Caco-2 (cell line): ENCODE measurements at regions of chr19 and their contacts with region 1.

Region 1: GRCh38 chr19:52048555-52049501 is at the start of gene ZNF432:
- DNase-seq: peak; percentile 92 to 93
- H3K4me3 ChIP-seq: peak within 1 kb of the TSS; percentile 86
- H3K4me3 Mint-ChIP-seq: peak within 1 kb of the TSS; percentile 93
- H3K27ac Mint-ChIP-seq: peak within 1 kb of the TSS; percentile 99
- H3K4me1 ChIP-seq: 0 out of 2 replicates have a peak, but pooled peaks cover 9% of the 10 kb centered on the region
- H3K4me1 Mint-ChIP-seq: peaks cover 17% of the 10 kb centered on the region
- H3K27me3 ChIP-seq: no peaks in the 10 kb centered on the region
- H3K27me3 Mint-ChIP-seq: no peaks in the 10 kb centered on the region
- CTCF ChIP-seq: no peak
- total RNA-seq, gene ZNF432: 7.0 and 10.5 TPM in 2 replicates

Region 2: DNA sequence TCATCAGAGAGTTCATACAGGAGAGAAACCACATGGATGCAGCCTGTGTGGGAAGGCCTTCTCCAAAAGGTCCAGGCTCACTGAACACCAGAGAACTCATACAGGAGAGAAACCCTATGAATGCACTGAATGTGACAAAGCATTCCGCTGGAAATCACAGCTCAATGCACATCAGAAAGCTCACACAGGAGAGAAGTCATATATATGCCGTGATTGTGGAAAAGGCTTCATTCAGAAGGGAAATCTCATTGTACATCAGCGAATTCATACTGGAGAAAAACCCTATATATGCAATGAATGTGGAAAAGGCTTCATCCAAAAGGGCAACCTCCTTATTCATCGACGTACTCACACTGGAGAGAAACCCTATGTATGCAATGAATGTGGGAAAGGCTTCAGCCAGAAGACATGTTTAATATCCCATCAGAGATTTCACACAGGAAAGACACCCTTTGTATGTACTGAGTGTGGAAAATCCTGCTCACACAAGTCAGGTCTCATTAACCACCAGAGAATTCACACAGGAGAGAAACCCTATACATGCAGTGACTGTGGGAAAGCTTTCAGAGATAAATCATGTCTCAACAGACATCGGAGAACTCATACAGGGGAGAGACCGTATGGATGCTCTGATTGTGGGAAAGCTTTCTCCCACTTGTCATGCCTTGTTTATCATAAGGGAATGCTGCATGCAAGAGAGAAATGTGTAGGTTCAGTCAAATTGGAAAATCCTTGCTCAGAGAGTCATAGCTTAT is 103.9 kb before region 1 on chr19:
- CTCF ChIA-PET with region 1: no interaction called
- POLR2A ChIA-PET with region 1: no interaction called
- intact Hi-C with region 1: no loop called
- DNase-seq: no peak
- H3K4me3 ChIP-seq: no peak overlapping the region
- H3K4me3 Mint-ChIP-seq: no peak overlapping the region
- H3K27ac Mint-ChIP-seq: no peak overlapping the region
- H3K4me1 ChIP-seq: no peaks in the 10 kb centered on the region
- H3K4me1 Mint-ChIP-seq: no peaks in the 10 kb centered on the region
- H3K27me3 ChIP-seq: no peaks in the 10 kb centered on the region
- H3K27me3 Mint-ChIP-seq: no peaks in the 10 kb centered on the region
- CTCF ChIP-seq: no peak

Region 3: DNA sequence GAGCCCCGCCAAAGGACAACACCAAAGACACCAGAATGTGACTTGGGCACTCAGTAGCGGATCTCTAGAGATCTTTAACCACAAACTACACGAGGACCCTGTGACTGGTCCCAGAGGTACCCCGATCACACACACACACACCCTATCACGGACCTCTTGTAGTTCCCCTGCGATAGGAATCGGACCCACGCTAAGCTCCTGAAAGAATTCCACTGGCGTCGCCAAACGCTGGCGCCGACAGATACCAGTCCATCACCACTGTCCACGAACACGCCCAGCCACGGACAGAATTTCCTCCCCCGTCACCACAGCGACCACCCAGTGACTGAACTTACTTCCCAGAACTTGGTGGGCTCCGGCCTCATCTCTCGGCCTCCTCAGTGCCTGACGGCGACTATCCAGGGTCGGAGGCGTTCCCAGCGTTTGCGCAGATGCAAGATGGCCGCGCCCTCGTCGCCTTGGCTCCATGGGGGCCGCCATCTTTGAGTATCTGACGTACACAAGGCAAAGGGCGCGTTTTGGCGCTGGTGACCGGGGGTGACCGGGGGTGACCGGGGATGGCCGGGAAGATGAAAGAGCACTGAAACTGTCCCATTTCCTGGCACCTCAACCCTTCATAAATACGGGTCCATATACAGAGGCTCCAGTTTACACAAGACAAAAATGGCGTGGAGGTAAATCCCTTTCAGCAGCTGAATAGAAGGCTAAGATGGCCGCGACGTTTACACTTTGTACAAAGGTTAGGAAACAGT is 40.8 kb before region 1 on chr19 and contains the start of gene ZNF615:
- CTCF ChIA-PET with region 1: no interaction called
- POLR2A ChIA-PET with region 1: interaction called, 5 read pairs
- intact Hi-C with region 1: loop called (anchors 1 kb)
- DNase-seq: peak; percentile 86 to 90
- H3K4me3 ChIP-seq: peak within 1 kb of the TSS; percentile 89
- H3K4me3 Mint-ChIP-seq: peak within 1 kb of the TSS; percentile 96
- H3K27ac Mint-ChIP-seq: peak within 1 kb of the TSS; percentile 98
- H3K4me1 ChIP-seq: no peaks in the 10 kb centered on the region
- H3K4me1 Mint-ChIP-seq: peaks cover 10% of the 10 kb centered on the region
- H3K27me3 ChIP-seq: no peaks in the 10 kb centered on the region
- H3K27me3 Mint-ChIP-seq: no peaks in the 10 kb centered on the region
- CTCF ChIP-seq: no peak
- total RNA-seq, gene ZNF615: 5.2 and 7.1 TPM in 2 replicates

Region 4: DNA sequence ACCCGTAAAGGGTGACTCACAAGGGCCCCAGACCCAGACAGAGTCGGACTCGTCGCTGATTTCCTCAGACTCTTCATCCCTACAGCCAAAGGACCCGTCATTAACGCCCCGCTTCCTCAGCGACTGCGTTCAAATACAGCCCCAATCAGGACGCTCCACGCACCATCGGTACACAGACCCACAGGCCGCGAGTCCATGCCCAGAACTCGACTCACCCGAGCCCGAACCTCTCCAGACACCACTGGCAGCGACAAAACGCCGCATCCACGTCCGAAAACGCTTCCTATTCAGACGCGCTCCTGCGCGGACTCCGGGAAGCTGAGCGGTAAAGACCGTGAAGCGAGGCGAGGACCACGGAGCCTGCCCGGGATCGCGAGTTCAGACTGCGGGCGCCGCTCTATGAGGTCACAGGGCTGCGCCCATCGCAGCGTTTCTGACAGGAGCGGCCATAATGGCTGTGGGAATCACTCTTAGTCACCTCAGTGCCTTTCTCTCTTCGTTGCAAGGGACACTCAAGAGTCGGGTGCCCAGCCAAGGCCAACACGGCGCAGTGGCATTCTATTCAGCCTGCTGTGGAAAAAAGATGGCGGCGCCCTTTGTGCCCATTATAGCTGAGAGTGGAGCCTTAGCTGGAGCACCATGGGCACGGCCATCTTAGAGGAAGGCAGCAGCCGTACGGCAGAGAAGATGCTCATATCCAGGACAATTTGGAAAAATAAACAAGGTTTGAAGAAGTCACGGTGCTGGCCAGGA is 20.6 kb before region 1 on chr19 and contains the start of gene ZNF614:
- CTCF ChIA-PET with region 1: interaction called, 3 read pairs
- POLR2A ChIA-PET with region 1: no interaction called
- intact Hi-C with region 1: loop called (anchors 1 kb)
- DNase-seq: peak; percentile 87 to 90
- H3K4me3 ChIP-seq: peak within 1 kb of the TSS; percentile 79
- H3K4me3 Mint-ChIP-seq: peak within 1 kb of the TSS; percentile 92
- H3K27ac Mint-ChIP-seq: peak within 1 kb of the TSS; percentile 93
- H3K4me1 ChIP-seq: peaks cover 32% of the 10 kb centered on the region
- H3K4me1 Mint-ChIP-seq: peaks cover 17% of the 10 kb centered on the region
- H3K27me3 ChIP-seq: no peaks in the 10 kb centered on the region
- H3K27me3 Mint-ChIP-seq: no peaks in the 10 kb centered on the region
- CTCF ChIP-seq: no peak
- total RNA-seq, gene ZNF614: 7.8 and 8.7 TPM in 2 replicates

Region 5: DNA sequence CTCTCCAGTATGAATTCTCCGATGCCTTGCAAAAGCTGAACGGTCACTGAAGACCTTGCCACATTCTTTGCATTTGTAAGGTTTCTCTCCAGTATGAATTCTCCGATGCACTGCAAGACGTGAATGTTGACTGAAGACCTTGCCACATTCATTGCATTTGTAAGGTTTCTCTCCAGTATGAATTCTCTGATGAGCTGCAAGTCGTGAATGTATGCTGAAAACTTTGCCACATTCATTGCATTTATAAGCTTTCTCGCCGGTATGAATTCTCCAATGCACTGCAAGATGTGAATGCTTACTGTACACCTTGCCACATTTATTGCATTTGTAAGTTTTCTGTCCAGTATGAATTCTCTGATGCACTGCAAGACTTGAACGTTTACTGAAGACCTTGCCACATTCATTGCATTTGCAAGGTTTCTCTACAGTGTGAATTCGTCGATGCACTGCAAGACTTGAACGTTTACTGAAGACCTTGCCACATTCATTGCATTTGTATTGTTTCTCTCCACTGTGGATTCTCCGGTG is 66.8 kb after region 1 on chr19:
- CTCF ChIA-PET with region 1: no interaction called
- POLR2A ChIA-PET with region 1: no interaction called
- intact Hi-C with region 1: no loop called
- DNase-seq: no peak
- H3K4me3 ChIP-seq: no peak overlapping the region
- H3K4me3 Mint-ChIP-seq: no peak overlapping the region
- H3K27ac Mint-ChIP-seq: no peak overlapping the region
- H3K4me1 ChIP-seq: no peaks in the 10 kb centered on the region
- H3K4me1 Mint-ChIP-seq: no peaks in the 10 kb centered on the region
- H3K27me3 ChIP-seq: no peaks in the 10 kb centered on the region
- H3K27me3 Mint-ChIP-seq: no peaks in the 10 kb centered on the region
- CTCF ChIP-seq: no peak

Region 6: GRCh38 chr19:52237771-52238400 is 189.1 kb after region 1 on chr19:
- CTCF ChIA-PET with region 1: no interaction called
- POLR2A ChIA-PET with region 1: no interaction called
- intact Hi-C with region 1: no loop called
- DNase-seq: peak; percentile 52 to 69
- H3K4me3 ChIP-seq: no peak overlapping the region
- H3K4me3 Mint-ChIP-seq: no peak overlapping the region
- H3K27ac Mint-ChIP-seq: no peak overlapping the region
- H3K4me1 ChIP-seq: no peaks in the 10 kb centered on the region
- H3K4me1 Mint-ChIP-seq: no peaks in the 10 kb centered on the region
- H3K27me3 ChIP-seq: no peaks in the 10 kb centered on the region
- H3K27me3 Mint-ChIP-seq: no peaks in the 10 kb centered on the region
- CTCF ChIP-seq: peak; percentile 88 to 90